ENCODE measurements at regions of chr5 and their contacts with region 1.

Region 1: GRCh38 chr5:123527190-123527589 is 15.2 kb downstream of the CSNK1G3 start:
- DNase-seq: no peak
- ATAC-seq: no peak
- H3K4me3 ChIP-seq: no peak overlapping the region
- H3K27ac ChIP-seq: no peak overlapping the region
- H3K4me1 ChIP-seq: peaks cover 18% of the 10 kb centered on the region
- H3K27me3 ChIP-seq: no peaks in the 10 kb centered on the region
- CTCF ChIP-seq: no peak
- EP300 ChIP-seq: no peak
- POLR2A ChIP-seq: no peak
- RAD21 ChIP-seq: no peak

Region 2: GRCh38 chr5:123579410-123579809 is 52.2 kb after region 1 on chr5:
- CTCF ChIA-PET with region 1: no interaction called
- POLR2A ChIA-PET with region 1: no interaction called
- in situ Hi-C with region 1: no loop called
- intact Hi-C with region 1: loop called (anchors 5 kb)
- DNase-seq: no peak
- ATAC-seq: no peak
- H3K4me3 ChIP-seq: no peak overlapping the region
- H3K27ac ChIP-seq: no peak overlapping the region
- H3K4me1 ChIP-seq: no peaks in the 10 kb centered on the region
- H3K27me3 ChIP-seq: no peaks in the 10 kb centered on the region
- CTCF ChIP-seq: no peak
- EP300 ChIP-seq: no peak
- POLR2A ChIP-seq: no peak
- RAD21 ChIP-seq: no peak

Region 3: GRCh38 chr5:123844873-123845272 is 317.7 kb after region 1 on chr5:
- CTCF ChIA-PET with region 1: no interaction called
- POLR2A ChIA-PET with region 1: no interaction called
- in situ Hi-C with region 1: no loop called
- intact Hi-C with region 1: no loop called
- DNase-seq: no peak
- ATAC-seq: no peak
- H3K4me3 ChIP-seq: no peak overlapping the region
- H3K27ac ChIP-seq: no peak overlapping the region
- H3K4me1 ChIP-seq: no peaks in the 10 kb centered on the region
- H3K27me3 ChIP-seq: no peaks in the 10 kb centered on the region
- CTCF ChIP-seq: no peak
- EP300 ChIP-seq: no peak
- POLR2A ChIP-seq: no peak
- RAD21 ChIP-seq: no peak

Region 4: GRCh38 chr5:124315741-124316415 is 788.7 kb after region 1 on chr5:
- CTCF ChIA-PET with region 1: no interaction called
- POLR2A ChIA-PET with region 1: no interaction called
- in situ Hi-C with region 1: no loop called
- intact Hi-C with region 1: no loop called
- DNase-seq: no peak
- ATAC-seq: no peak
- H3K4me3 ChIP-seq: no peak overlapping the region
- H3K27ac ChIP-seq: no peak overlapping the region
- H3K4me1 ChIP-seq: no peaks in the 10 kb centered on the region
- H3K27me3 ChIP-seq: no peaks in the 10 kb centered on the region
- CTCF ChIP-seq: no peak
- EP300 ChIP-seq: no peak
- POLR2A ChIP-seq: no peak
- RAD21 ChIP-seq: no peak